AG04449 (cell line): ENCODE measurements at regions of chr3 and their contacts with region 1.

Region 1: DNA sequence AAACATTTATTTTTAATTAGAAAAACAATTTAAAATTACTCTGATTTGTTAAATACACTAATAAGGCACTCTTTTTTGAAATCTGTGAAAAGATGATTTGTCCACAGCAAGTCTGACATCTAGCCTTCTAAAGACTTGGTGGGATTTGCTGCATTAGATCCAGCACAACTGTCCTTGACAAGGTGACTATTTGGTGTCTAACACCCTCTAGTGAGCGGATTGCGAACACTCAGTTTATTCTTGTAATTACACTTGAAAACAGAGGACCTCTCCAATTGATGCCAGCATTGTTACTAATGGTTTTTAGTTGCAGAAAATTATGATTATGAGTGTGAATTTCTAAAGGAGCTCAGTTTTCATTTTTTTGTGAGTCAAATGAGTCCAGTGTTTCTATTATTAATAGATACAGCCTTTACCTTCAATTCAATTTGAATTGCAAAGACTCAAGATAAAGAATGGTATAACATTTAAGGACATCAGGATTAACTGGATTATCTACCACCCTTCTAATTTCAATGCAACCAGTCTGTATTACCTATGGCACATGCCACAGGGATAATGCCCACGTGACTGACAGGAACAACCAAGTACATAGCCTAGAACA is 29.7 kb upstream of the STRIT1 start:
- DNase-seq: peak; percentile 49
- H3K4me3 ChIP-seq: no peak overlapping the region
- CTCF ChIP-seq: peak; percentile 68

Region 2: GRCh38 chr3:154758109-154758868 is 564.9 kb before region 1 on chr3:
- CTCF ChIA-PET with region 1: interaction called, 43 read pairs
- POLR2A ChIA-PET with region 1: no interaction called
- DNase-seq: no peak
- H3K4me3 ChIP-seq: no peak overlapping the region
- CTCF ChIP-seq: peak; percentile 24

Region 3: GRCh38 chr3:154904328-154904727 is 418.8 kb before region 1 on chr3:
- CTCF ChIA-PET with region 1: interaction called, 42 read pairs
- POLR2A ChIA-PET with region 1: no interaction called
- DNase-seq: no peak
- H3K4me3 ChIP-seq: no peak overlapping the region
- CTCF ChIP-seq: peak; percentile 22

Region 4: DNA sequence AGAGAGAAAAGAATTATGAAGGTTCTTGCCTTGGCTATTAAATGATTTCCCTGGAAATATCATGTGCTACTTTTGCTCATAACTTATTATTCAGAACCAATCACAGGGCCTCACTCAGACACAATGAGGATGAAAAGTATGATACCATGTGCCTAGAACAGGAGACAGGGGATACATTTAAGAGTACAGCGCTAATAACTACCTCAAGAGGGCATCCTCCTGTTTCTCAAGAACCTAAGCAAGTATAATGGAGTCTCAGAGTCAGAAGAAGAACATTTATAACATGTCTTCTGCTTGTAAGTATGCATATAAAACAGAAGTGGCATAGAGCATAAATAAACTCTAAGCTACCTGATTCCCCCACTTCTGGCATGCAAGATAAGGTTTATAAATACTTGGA is 368.4 kb before region 1 on chr3:
- CTCF ChIA-PET with region 1: interaction called, 47 read pairs
- POLR2A ChIA-PET with region 1: no interaction called
- DNase-seq: peak; percentile 53
- H3K4me3 ChIP-seq: no peak overlapping the region
- CTCF ChIP-seq: peak; percentile 61

Region 5: GRCh38 chr3:155334914-155335723 is 12.0 kb after region 1 on chr3:
- CTCF ChIA-PET with region 1: interaction called, 13 read pairs
- POLR2A ChIA-PET with region 1: no interaction called
- DNase-seq: no peak
- H3K4me3 ChIP-seq: no peak overlapping the region
- CTCF ChIP-seq: no peak

Region 6: DNA sequence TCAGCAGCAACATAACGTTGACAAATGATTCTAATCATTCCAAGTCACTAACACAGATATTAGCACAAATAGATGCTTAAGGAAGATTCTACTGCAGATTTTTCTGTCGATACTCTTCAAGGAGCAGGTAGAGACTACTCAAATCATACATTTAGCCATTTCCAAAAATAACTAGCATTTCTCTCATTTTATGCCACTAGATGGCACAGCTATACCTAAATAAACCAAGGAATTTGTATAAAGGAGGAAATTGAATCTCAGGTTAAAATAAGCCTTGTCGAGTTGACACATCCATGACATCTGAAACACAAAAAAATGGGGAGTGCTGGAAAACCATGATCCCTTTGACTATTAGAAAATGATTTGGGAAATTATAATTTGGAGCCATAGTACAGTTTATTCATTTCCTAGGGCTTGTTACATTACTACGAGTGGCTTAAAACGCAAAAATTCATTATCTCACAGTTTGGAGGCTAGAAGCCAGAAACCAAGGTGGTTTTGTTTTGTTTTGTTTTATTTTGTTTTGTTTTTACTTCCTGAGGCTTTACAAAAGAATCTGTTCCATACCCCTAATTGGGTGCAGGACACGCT is 29.8 kb after region 1 on chr3:
- CTCF ChIA-PET with region 1: interaction called, 11 read pairs
- POLR2A ChIA-PET with region 1: no interaction called
- DNase-seq: no peak
- H3K4me3 ChIP-seq: no peak overlapping the region
- CTCF ChIP-seq: peak; percentile 30

Region 7: GRCh38 chr3:155428563-155428962 is 105.4 kb after region 1 on chr3:
- CTCF ChIA-PET with region 1: no interaction called
- POLR2A ChIA-PET with region 1: no interaction called
- DNase-seq: peak; percentile 9
- H3K4me3 ChIP-seq: no peak overlapping the region
- CTCF ChIP-seq: no peak